Activated naive CD4-positive, alpha-beta T cell treated with anti-CD3 and anti-CD28 coated beads for 36 hours (primary cell): ENCODE measurements at regions of chr12 and their contacts with region 1.

Region 1: GRCh38 chr12:56448860-56449621 is at the start of gene TIMELESS:
- DNase-seq: peak; percentile 90
- H3K4me3 Mint-ChIP-seq: peak within 1 kb of the TSS; percentile 89
- H3K27ac Mint-ChIP-seq: peak within 1 kb of the TSS; percentile 96
- H3K4me1 Mint-ChIP-seq: peaks cover 16% of the 10 kb centered on the region
- H3K27me3 Mint-ChIP-seq: no peaks in the 10 kb centered on the region
- total RNA-seq, gene TIMELESS: 69.9 to 70.8 TPM

Region 2: GRCh38 chr12:56127888-56128669 is 321.0 kb before region 1 on chr12 and contains the start of gene ESYT1:
- CTCF ChIA-PET with region 1: no interaction called
- intact Hi-C with region 1: loop called (anchors 1 kb)
- DNase-seq: peak; percentile 99
- H3K4me3 Mint-ChIP-seq: peak within 1 kb of the TSS; percentile 91
- H3K27ac Mint-ChIP-seq: peak within 1 kb of the TSS; percentile 86
- H3K4me1 Mint-ChIP-seq: peaks cover 55% of the 10 kb centered on the region
- H3K27me3 Mint-ChIP-seq: no peaks in the 10 kb centered on the region
- total RNA-seq, gene ESYT1: 87.4 to 88.9 TPM

Region 3: DNA sequence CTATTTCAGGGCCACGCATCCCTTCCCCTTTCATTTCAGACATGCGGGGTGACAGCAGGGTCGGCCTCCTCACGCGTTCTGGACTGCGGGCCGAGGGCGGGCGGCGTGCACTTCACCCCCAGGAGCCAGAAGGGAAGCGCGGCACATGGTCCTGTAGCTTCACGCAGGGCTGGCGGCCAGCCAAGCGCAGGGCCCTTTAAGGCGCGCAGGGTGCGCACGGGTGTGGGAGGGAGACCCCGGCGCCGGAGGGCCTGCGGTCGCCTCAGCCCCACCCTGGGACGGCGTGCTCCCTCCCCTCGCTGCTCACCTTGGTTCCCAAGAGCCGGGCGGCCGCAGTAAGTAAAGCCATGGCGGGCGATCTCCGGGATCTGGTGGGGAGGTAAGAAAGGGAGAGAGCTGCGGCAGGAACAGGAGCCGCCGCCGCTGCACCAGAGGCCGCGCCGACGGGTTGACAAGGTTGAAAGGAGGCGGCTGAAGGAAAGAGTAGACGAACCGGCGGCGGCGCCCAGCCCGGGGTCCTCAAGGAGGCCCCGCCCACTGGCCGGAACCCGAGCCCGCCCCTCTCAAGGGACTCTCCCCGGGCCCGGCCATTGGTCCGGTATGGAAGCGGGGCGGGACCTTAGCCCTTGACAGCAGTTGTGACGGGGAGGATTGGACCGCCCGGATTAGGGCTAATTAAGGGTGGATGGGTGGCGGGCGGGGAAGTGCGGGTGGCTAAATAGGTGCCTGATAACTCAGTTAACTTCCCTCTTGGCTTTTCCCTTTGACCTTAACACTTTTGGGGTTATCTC is 149.0 kb before region 1 on chr12 and contains the start of gene CS:
- CTCF ChIA-PET with region 1: no interaction called
- intact Hi-C with region 1: loop called (anchors 1 kb)
- DNase-seq: peak; percentile 99
- H3K4me3 Mint-ChIP-seq: peak within 1 kb of the TSS; percentile 91
- H3K27ac Mint-ChIP-seq: peak within 1 kb of the TSS; percentile 92
- H3K4me1 Mint-ChIP-seq: peaks cover 42% of the 10 kb centered on the region
- H3K27me3 Mint-ChIP-seq: no peaks in the 10 kb centered on the region
- total RNA-seq, gene CS: 330 to 336 TPM

Region 4: DNA sequence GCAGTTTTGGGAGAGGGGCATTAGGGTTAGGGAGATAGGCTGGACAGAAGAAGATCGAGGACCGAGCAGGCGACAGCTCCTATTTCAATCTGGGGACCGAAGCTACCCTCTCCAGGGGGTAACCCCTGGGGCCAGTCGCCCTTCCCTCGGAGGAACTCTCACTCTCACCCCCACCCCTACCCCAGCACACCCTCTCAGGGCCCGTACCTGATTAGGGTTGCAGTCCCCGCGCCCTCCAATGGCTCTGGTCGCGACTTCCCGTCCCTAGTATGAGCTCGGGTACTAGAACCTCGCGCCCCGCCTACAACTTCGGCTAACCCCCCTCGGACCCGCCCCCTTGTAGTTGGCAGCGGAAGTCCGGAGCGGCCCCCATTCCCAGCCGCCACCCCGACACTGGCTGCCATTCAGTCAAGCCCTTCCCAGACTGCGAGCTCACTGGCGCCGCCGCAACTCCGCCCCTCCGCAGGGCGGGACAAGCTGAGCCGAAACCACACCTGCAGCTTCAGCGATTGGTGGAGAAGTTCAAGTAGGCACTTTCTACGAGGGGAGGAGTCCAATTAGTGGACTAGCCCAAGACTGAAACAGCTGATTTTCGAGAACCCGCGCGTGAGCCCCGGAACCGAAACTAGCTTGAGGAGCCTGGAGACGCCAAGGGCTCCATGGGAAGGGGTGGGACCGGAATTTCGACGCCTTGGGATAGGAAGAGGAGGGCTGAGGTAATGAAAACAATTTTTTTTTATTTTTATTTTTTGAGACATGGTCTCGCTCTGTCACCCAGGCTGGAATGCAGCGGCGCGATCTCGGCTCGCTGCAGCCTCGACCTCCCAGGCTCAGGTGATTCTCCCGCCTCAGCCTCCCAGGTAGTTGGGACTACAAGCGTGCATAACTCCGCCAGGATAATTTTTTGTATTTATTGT is 88.9 kb before region 1 on chr12 and contains the start of gene STAT2:
- CTCF ChIA-PET with region 1: interaction called, 3 read pairs
- intact Hi-C with region 1: loop called (anchors 1 kb)
- DNase-seq: peak; percentile 99
- H3K4me3 Mint-ChIP-seq: peak within 1 kb of the TSS; percentile 93
- H3K27ac Mint-ChIP-seq: peak within 1 kb of the TSS; percentile 93
- H3K4me1 Mint-ChIP-seq: peaks cover 20% of the 10 kb centered on the region
- H3K27me3 Mint-ChIP-seq: no peaks in the 10 kb centered on the region
- total RNA-seq, gene STAT2: 109 to 119 TPM

Region 5: DNA sequence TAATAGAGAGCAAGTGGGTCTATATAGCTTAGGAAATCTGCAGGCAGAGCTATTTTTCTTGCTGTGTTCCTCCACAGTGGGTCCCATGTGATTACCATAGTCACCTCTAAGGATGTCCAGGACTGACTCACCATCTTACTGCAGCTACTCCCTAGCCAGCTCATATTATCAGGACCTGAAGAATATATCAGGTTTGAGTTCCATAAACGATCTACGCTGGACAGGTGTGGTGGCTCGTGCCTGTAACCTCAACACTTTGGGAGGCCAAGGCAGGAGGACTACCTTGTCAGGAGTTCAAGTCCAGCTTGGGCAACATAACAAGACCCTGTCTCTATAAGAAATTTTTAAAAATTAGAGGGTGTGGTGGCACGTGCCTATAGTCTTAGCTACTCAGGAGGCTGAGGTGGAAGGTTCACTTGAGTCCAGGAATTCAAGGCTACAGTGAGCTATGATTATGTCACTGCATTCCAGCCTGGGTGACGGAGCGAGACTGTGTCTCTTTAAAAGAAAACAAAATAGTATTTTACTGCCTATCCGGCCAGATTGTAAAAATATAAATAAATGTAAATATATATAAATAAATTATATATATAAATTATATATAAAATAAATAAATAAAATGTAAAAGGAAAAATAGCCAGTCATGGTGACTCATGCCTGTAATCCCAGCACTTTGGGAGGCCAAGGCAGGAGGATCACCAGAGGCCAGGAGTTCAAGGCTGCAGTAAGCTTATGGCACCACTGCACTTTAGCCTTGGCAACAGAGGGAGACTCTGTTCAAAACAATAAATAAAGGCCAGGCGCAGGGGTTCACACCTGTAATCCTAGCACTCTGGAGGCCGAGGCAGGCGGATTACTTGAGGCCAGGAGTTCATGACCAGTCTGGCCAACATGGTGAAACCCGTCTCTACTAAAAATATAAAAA is 12.5 kb after region 1 on chr12:
- CTCF ChIA-PET with region 1: interaction called, 33 read pairs
- intact Hi-C with region 1: loop called (anchors 1 kb)
- DNase-seq: no peak
- H3K4me3 Mint-ChIP-seq: no peak overlapping the region
- H3K27ac Mint-ChIP-seq: no peak overlapping the region
- H3K4me1 Mint-ChIP-seq: peaks cover 3% of the 10 kb centered on the region
- H3K27me3 Mint-ChIP-seq: no peaks in the 10 kb centered on the region

Region 6: GRCh38 chr12:56510786-56511185 is 61.7 kb after region 1 on chr12:
- CTCF ChIA-PET with region 1: no interaction called
- intact Hi-C with region 1: no loop called
- DNase-seq: no peak
- H3K4me3 Mint-ChIP-seq: no peak overlapping the region
- H3K27ac Mint-ChIP-seq: no peak overlapping the region
- H3K4me1 Mint-ChIP-seq: no peaks in the 10 kb centered on the region
- H3K27me3 Mint-ChIP-seq: no peaks in the 10 kb centered on the region